Activated CD4-positive, alpha-beta memory T cell treated with anti-CD3 and anti-CD28 coated beads for 36 hours (primary cell): ENCODE measurements at regions of chr19 and their contacts with region 1.

Region 1: DNA sequence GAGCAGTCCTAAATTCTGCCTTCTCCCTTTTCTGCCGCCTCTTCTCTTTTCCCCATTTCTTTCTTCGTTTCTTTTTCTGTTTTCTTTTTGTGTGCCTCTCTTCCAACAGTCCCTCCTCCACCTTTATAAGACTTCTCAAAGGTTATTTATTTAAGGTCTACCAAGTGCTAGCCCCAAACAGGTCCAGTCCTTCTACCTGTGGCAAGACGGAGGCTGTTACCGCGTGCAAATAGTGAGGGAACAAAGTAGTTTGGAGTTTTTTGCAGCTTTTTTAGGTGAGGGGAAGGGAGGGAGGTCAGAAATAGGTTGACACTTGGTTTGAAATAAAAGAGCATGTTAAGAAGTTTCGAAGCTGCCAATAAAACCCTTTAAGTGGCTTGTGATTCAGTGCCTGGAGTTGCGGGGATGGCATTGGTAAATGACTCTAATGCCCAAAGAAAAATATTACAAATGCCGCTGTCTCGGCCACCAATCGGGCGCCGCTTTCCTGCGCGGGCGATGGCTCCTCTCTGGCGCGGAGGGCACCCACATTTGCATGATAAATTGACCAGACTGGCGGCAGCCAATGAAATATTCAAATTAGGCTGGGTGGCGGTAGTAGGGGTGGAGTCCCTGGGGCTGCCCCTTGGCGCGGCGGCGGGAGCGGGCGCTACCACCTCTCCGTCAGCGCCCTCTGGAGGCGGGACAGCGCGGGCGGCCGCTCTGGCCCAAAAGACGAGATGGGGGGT is 7.5 kb upstream of the TSHZ3 start:
- DNase-seq: peak; percentile 80
- H3K4me3 Mint-ChIP-seq: no peak overlapping the region
- H3K27ac Mint-ChIP-seq: no peak overlapping the region
- H3K4me1 Mint-ChIP-seq: peaks cover 47% of the 10 kb centered on the region
- H3K27me3 Mint-ChIP-seq: peaks cover 71% of the 10 kb centered on the region

Region 2: DNA sequence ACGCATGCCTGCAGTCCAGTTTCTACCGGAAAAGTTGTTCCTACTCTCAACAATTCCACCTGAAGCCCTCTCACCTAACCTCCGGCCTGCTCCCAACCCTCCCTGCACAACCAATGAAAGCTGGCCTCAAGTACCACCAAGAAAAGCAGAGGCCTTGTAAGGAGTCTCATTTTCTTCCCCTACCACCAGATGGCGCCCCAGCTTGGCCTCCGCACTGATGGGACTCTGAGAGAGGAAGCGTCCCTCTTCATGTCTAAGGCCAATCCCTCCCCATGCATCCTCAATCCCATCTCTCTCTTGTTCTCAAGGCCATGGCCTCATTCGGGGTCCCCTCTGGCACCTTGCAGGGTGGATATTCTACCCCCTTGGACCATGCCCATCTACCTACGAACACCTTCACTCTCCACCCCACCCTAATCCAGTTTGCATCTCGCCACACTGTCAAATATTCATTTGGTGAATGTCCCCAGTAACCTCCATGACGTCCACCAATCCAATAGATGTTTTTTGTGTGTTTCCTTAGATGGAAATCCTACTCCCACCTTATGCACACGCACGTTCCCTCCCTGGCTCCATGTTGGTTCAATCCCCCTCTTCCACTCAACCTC is 571.8 kb before region 1 on chr19:
- CTCF ChIA-PET with region 1: interaction called, 7 read pairs
- POLR2A ChIA-PET with region 1: no interaction called
- intact Hi-C with region 1: loop called (anchors 2 kb)
- DNase-seq: peak; percentile 73
- H3K4me3 Mint-ChIP-seq: no peak overlapping the region
- H3K27ac Mint-ChIP-seq: no peak overlapping the region
- H3K4me1 Mint-ChIP-seq: no peaks in the 10 kb centered on the region
- H3K27me3 Mint-ChIP-seq: peaks cover 6% of the 10 kb centered on the region

Region 3: GRCh38 chr19:31054430-31054829 is 302.3 kb before region 1 on chr19:
- CTCF ChIA-PET with region 1: interaction called, 16 read pairs
- POLR2A ChIA-PET with region 1: no interaction called
- intact Hi-C with region 1: loop called (anchors 1 kb)
- DNase-seq: peak; percentile 58
- H3K4me3 Mint-ChIP-seq: no peak overlapping the region
- H3K27ac Mint-ChIP-seq: no peak overlapping the region
- H3K4me1 Mint-ChIP-seq: no peaks in the 10 kb centered on the region
- H3K27me3 Mint-ChIP-seq: peaks cover 16% of the 10 kb centered on the region

Region 4: GRCh38 chr19:31110331-31110730 is 246.4 kb before region 1 on chr19:
- CTCF ChIA-PET with region 1: interaction called, 4 read pairs
- POLR2A ChIA-PET with region 1: no interaction called
- intact Hi-C with region 1: loop called (anchors 1 kb)
- DNase-seq: peak; percentile 30
- H3K4me3 Mint-ChIP-seq: no peak overlapping the region
- H3K27ac Mint-ChIP-seq: no peak overlapping the region
- H3K4me1 Mint-ChIP-seq: peaks cover 13% of the 10 kb centered on the region
- H3K27me3 Mint-ChIP-seq: peaks cover 24% of the 10 kb centered on the region

Region 5: GRCh38 chr19:31518216-31519020 is 161.7 kb after region 1 on chr19:
- CTCF ChIA-PET with region 1: no interaction called
- POLR2A ChIA-PET with region 1: no interaction called
- intact Hi-C with region 1: no loop called
- DNase-seq: no peak
- H3K4me3 Mint-ChIP-seq: no peak overlapping the region
- H3K27ac Mint-ChIP-seq: no peak overlapping the region
- H3K4me1 Mint-ChIP-seq: no peaks in the 10 kb centered on the region
- H3K27me3 Mint-ChIP-seq: no peaks in the 10 kb centered on the region